T-cell (primary cell): ENCODE measurements at regions of chr5 and their contacts with region 1.

Region 1: GRCh38 chr5:113513384-113514288 is at the start of gene YTHDC2:
- DNase-seq: peak; percentile 75 to 94 (median 86)
- ATAC-seq: peak; percentile 98 to 99 (median 99)
- H3K4me3 ChIP-seq: peak within 1 kb of the TSS; percentile 70 to 86
- H3K4me3 Mint-ChIP-seq: peak within 1 kb of the TSS; percentile 92 to 93 (median 92)
- H3K27ac ChIP-seq: peak within 1 kb of the TSS; percentile 93
- H3K27ac Mint-ChIP-seq: peak within 1 kb of the TSS; percentile 83 to 95
- H3K4me1 ChIP-seq: peaks cover 8 to 11% of the 10 kb centered on the region in 2 experiments
- H3K4me1 Mint-ChIP-seq: peaks cover 36 to 39% (median 36%) of the 10 kb centered on the region in 3 donors
- H3K27me3 ChIP-seq: peaks cover 3 to 4% of the 10 kb centered on the region in 2 experiments
- H3K27me3 Mint-ChIP-seq: peaks cover 9 to 13% of the 10 kb centered on the region in 2 donors
- total RNA-seq, gene YTHDC2: 31.5 to 52.0 (median 38.2) TPM

Region 2: DNA sequence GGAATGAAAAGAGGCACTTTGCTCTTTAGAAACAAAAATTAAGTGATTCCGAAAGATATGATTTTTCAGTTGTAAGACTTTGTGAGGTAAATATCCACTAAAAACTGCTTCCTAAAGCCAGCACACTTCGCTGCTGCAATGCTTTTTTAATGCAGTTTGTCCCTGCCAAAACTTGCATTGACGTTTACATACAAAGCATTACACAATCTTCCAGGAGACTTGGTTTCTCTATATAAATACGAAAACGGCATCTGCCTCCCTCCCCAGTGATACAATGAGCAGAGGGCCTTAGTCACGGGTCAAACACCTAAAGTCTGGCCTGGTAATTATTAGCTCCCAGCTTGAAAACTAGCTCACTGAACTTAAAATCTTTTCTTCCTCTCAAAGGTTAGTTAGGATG is 249.6 kb before region 1 on chr5:
- CTCF ChIA-PET with region 1: interaction called in 1 of 2 experiments, 11 read pairs
- POLR2A ChIA-PET with region 1: no interaction called
- DNase-seq: no peak
- ATAC-seq: no peak
- H3K4me3 ChIP-seq: no peak overlapping the region
- H3K4me3 Mint-ChIP-seq: no peak overlapping the region
- H3K27ac ChIP-seq: no peak overlapping the region
- H3K27ac Mint-ChIP-seq: no peak overlapping the region
- H3K4me1 ChIP-seq: no peaks in the 10 kb centered on the region
- H3K4me1 Mint-ChIP-seq: peaks cover under 1 to 3% (median 2%) of the 10 kb centered on the region in 3 donors
- H3K27me3 ChIP-seq: no peaks in the 10 kb centered on the region
- H3K27me3 Mint-ChIP-seq: no peaks in the 10 kb centered on the region

Region 3: DNA sequence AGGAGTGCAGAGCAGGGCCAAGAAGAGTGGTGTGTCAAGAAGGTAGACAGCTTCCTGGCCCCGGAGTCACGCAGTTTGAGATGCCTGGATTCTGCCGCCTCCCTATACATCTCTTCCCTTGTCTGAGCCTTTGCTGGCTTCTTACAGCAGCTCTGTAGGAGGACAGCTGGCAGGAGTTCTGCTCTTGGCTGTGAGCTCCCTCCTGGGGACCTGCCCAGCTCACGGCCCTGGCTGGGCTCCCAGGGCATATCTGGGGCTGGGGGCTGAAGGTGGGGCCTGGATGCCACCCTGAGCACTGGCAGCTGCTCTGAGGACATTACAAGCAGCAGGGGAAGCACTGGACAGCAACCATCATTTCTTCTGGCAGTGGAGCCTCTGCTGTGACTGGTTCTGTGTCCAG is 78.1 kb before region 1 on chr5:
- CTCF ChIA-PET with region 1: interaction called in 1 of 2 experiments, 10 read pairs
- POLR2A ChIA-PET with region 1: no interaction called
- DNase-seq: no peak
- ATAC-seq: no peak
- H3K4me3 ChIP-seq: no peak overlapping the region
- H3K4me3 Mint-ChIP-seq: no peak overlapping the region
- H3K27ac ChIP-seq: no peak overlapping the region
- H3K27ac Mint-ChIP-seq: no peak overlapping the region
- H3K4me1 ChIP-seq: no peaks in the 10 kb centered on the region
- H3K4me1 Mint-ChIP-seq: peaks cover 0 to 4% (median 0%) of the 10 kb centered on the region in 3 donors
- H3K27me3 ChIP-seq: peaks cover 2 to 12% of the 10 kb centered on the region in 2 experiments
- H3K27me3 Mint-ChIP-seq: peaks cover under 1 to 4% of the 10 kb centered on the region in 2 donors

Region 4: DNA sequence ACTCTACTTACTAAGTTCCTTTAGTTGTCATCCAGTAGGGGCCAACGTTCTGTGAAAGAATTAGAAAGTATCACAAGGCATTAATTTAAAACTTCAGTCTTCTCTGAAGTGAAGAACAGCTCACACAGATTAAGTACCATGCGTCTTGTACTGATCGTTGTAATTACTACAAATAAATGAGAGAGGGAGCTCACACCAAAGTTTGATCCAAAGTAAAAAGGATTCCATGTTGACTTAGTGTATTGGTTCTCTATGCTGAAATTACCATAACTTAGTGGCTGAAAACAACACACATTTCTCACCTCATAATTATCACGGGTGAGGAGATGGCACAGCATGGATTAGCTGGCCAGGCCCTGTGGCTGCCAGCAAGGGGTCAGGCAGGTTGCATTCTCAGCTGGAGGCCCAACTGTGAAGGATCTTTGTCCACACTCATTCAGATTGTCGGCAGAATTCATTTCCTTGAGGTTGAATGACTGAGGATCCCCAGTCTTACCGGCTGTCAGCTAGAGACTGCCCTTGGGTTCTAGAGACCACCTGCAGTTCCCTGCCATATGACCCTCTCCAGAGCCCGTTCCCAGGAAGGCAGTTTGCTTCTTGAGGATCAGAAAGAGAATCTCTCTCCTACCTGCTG is 169.0 kb after region 1 on chr5:
- CTCF ChIA-PET with region 1: no interaction called
- POLR2A ChIA-PET with region 1: no interaction called
- DNase-seq: no peak
- ATAC-seq: no peak
- H3K4me3 ChIP-seq: no peak overlapping the region
- H3K4me3 Mint-ChIP-seq: no peak overlapping the region
- H3K27ac ChIP-seq: no peak overlapping the region
- H3K27ac Mint-ChIP-seq: no peak overlapping the region
- H3K4me1 ChIP-seq: no peaks in the 10 kb centered on the region
- H3K4me1 Mint-ChIP-seq: no peaks in the 10 kb centered on the region
- H3K27me3 ChIP-seq: no peaks in the 10 kb centered on the region
- H3K27me3 Mint-ChIP-seq: peaks cover 2 to 5% of the 10 kb centered on the region in 2 donors